ENCODE measurements at regions of chr11 and their contacts with region 1.

Region 1: GRCh38 chr11:44133335-44133946 is 38.0 kb downstream of the EXT2 start:
- DNase-seq: no peak
- ATAC-seq: peak; percentile 55; the same call in 2 of the 3 replicates
- H3K4me3 ChIP-seq: no peak overlapping the region
- H3K27ac ChIP-seq: no peak overlapping the region
- H3K4me1 ChIP-seq: no peaks in the 10 kb centered on the region
- H3K27me3 ChIP-seq: no peaks in the 10 kb centered on the region
- CTCF ChIP-seq: peak; percentile 52 to 63 (median 59)
- EP300 ChIP-seq: no peak
- POLR2A ChIP-seq: no peak
- RAD21 ChIP-seq: peak; percentile 52

Region 2: GRCh38 chr11:43895601-43896000 is 237.8 kb before region 1 on chr11:
- CTCF ChIA-PET with region 1: no interaction called
- POLR2A ChIA-PET with region 1: no interaction called
- RAD21 ChIA-PET with region 1: no interaction called
- SMC1A ChIA-PET with region 1: no interaction called
- in situ Hi-C with region 1: no loop called
- intact Hi-C with region 1: no loop called
- DNase-seq: no peak
- ATAC-seq: no peak
- H3K4me3 ChIP-seq: no peak overlapping the region
- H3K27ac ChIP-seq: no peak overlapping the region
- H3K4me1 ChIP-seq: no peaks in the 10 kb centered on the region
- H3K27me3 ChIP-seq: no peaks in the 10 kb centered on the region
- CTCF ChIP-seq: no peak
- EP300 ChIP-seq: no peak
- POLR2A ChIP-seq: no peak
- RAD21 ChIP-seq: no peak

Region 3: DNA sequence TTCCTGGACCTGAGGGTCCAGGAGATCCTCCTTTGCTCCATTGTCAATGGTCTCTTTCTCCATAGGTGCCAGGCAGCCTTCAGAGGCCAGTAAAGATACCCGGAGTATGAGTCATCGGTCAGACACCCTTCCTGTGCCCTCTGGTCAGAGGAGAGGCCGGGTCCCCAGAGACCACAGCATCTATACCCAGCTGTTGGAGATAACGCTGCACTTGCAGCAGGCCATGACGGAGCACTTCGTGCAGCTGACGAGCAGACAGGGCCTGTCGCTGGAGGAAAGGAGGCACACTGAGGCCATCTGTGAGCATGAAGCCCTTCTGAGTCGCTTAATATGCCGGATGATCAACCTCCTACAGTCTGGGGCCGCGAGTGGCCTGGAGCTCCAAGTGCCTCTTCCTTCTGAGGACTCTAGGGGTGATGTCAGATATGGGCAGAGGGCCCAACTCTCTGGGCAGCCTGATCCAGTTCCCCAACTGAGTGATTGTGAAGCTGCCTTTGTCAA is 85.5 kb before region 1 on chr11 and contains the start of gene ACCSL:
- CTCF ChIA-PET with region 1: no interaction called
- POLR2A ChIA-PET with region 1: no interaction called
- RAD21 ChIA-PET with region 1: no interaction called
- SMC1A ChIA-PET with region 1: no interaction called
- in situ Hi-C with region 1: no loop called
- intact Hi-C with region 1: no loop called
- DNase-seq: no peak
- ATAC-seq: no peak
- H3K4me3 ChIP-seq: no peak within 1 kb of the TSS
- H3K27ac ChIP-seq: no peak within 1 kb of the TSS
- H3K4me1 ChIP-seq: no peaks in the 10 kb centered on the region
- H3K27me3 ChIP-seq: no peaks in the 10 kb centered on the region; a peak in 1 of 4 replicates
- CTCF ChIP-seq: no peak
- EP300 ChIP-seq: no peak
- POLR2A ChIP-seq: no peak
- RAD21 ChIP-seq: no peak
- polyA plus RNA-seq, gene ACCSL: not detected

Region 4: GRCh38 chr11:44110231-44110679 is 23.2 kb before region 1 on chr11:
- CTCF ChIA-PET with region 1: interaction called, 13 read pairs
- POLR2A ChIA-PET with region 1: no interaction called
- RAD21 ChIA-PET with region 1: interaction called, 4 read pairs
- SMC1A ChIA-PET with region 1: interaction called, 5 read pairs
- in situ Hi-C with region 1: no loop called
- intact Hi-C with region 1: no loop called
- DNase-seq: no peak
- ATAC-seq: peak; percentile 98
- H3K4me3 ChIP-seq: no peak overlapping the region
- H3K27ac ChIP-seq: 0 out of 2 replicates have a peak overlapping the region, but pooled peaks have one; percentile 22
- H3K4me1 ChIP-seq: peaks cover 8% of the 10 kb centered on the region
- H3K27me3 ChIP-seq: no peaks in the 10 kb centered on the region
- CTCF ChIP-seq: peak; percentile 85 to 94 (median 90)
- EP300 ChIP-seq: no peak
- POLR2A ChIP-seq: no peak
- RAD21 ChIP-seq: peak; percentile 90

Region 5: DNA sequence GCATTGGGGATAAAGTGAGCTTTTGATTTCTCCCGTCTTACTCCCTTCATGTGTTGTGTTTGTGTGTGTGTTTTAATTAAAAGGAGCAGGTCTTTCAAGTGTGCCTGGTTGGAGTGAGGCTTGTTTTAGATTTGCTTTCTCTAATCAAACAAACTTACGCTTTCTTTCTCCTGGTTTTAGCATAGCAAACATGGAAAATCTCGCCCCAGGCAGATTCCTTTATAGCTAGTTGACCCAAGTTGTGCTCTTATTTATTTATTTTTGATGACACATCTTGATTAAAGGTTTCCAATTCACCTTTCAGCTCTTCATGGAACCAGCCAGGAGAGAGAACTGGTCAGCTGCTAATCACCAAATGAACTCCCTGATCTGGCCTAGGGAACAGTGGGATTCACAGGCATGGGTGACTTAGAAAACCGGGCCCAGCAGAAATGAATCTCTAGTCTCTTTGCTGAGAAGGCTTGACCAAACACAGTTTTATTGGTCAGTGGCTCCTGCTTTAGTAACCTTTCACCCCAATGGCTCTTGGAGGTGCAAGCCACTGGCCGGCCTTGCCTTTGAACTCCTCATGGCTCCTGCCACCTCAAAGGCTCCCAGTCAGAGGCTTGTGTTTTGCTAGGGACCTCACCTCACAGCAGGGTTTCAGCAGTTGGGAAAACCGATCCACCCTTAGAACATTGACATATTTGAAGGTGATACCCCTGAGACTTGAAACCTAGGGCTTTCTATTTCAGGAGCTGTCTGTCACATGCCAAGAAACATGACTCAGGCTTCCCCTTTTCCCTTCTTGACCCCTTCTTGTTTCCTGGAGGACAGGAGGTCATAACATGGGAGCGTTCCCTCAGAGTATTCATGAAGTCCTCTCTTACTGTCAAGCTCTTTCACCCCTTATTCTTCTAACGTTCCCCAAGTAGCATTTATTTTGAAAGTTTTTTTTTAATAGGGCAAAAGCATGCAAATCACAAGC is 10.8 kb after region 1 on chr11:
- CTCF ChIA-PET with region 1: interaction called, 18 read pairs
- POLR2A ChIA-PET with region 1: interaction called, 3 read pairs
- RAD21 ChIA-PET with region 1: no interaction called
- SMC1A ChIA-PET with region 1: interaction called, 5 read pairs
- in situ Hi-C with region 1: no loop called
- intact Hi-C with region 1: no loop called
- DNase-seq: no peak
- ATAC-seq: no peak
- H3K4me3 ChIP-seq: no peak overlapping the region
- H3K27ac ChIP-seq: no peak overlapping the region
- H3K4me1 ChIP-seq: no peaks in the 10 kb centered on the region
- H3K27me3 ChIP-seq: no peaks in the 10 kb centered on the region
- CTCF ChIP-seq: no peak
- EP300 ChIP-seq: no peak
- POLR2A ChIP-seq: no peak
- RAD21 ChIP-seq: no peak

Region 6: DNA sequence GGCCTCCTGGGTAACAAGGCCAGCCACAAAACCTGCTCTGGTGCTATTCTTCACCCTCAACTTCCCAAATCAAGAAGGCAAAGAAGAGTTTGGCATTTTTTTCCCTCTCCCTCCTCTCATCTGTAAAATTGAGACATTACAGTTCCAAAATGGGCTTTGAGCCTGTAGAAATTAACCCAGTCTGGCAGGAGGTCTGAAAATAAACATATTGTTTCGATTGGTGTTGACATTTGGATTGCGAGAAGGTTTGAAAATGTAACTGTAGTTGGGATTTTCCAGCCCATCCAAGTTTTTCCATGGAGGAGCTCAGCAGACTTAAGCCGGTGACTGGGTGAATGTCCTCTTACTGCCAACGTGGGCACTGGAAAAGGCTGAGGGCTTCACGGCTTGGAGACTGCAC is 211.5 kb after region 1 on chr11:
- CTCF ChIA-PET with region 1: no interaction called
- POLR2A ChIA-PET with region 1: no interaction called
- RAD21 ChIA-PET with region 1: no interaction called
- SMC1A ChIA-PET with region 1: no interaction called
- in situ Hi-C with region 1: no loop called
- intact Hi-C with region 1: no loop called
- DNase-seq: no peak
- ATAC-seq: no peak
- H3K4me3 ChIP-seq: no peak overlapping the region
- H3K27ac ChIP-seq: no peak overlapping the region
- H3K4me1 ChIP-seq: no peaks in the 10 kb centered on the region
- H3K27me3 ChIP-seq: peaks cover 1 to 5% of the 10 kb centered on the region in 2 experiments; a peak in 3 of 4 replicates
- CTCF ChIP-seq: no peak
- EP300 ChIP-seq: no peak
- POLR2A ChIP-seq: no peak
- RAD21 ChIP-seq: no peak

Measured in GM12878 (cell line).